ENCODE measurements at regions of chr5 and their contacts with region 1.

Region 1: DNA sequence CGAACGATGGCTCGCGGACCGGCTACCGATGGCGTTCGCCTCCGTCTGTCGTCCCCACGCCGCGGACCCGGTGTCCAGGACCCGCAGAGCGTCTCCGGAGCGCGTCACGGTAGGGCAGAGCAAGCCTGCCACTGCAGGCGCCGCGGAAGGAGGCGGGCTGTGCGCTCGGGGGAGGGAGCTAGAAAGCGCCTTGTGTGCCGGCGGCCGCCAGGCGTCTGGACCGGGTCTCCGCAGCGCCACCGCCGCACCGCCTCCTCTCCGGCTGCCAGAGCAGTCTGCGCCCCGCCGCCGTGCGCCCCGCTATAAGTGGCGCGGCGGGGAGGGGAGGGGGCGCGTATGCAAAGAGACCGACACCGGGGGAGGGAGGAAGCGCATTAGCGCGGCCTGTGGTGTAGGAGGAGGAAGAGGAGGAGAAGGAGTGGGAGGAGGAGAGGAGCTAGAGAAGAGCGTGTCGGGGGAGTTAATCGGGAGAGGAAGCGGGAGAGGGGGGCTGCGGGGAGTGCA is at the start of gene ENC1:
- DNase-seq: peak; percentile 96
- ATAC-seq: peak; percentile 94
- total RNA-seq, gene ENC1: 3.7 TPM

Region 2: DNA sequence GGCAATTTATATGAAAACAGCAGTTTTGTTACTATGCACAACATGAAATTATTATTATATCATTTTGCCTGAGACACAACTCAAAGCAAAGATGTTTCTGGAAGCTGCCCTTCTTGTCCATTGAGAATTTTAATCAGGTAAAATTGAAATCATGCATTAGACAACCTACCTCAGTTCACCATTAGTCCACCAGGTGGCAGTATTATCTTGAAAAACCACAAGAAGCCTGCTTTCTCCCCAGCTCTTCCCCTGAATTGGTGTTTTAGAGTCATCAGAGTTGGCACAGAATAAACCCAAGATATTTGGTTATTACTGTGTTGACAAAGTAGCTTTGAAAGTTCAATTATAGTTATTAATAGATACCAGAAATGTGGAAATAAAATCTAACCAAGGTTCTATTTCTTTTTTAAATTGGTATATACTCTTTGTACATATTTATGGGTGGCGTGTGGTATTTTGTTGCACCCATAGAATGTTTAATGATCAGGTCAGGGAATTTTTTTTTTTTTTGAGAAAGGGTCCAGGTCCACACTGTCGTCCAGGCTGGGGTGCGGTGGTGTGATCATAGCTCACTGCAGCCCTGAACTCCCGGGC is 1049.3 kb before region 1 on chr5:
- intact Hi-C with region 1: loop called (anchors 10 kb)
- DNase-seq: no peak
- ATAC-seq: no peak

Region 3: GRCh38 chr5:74035521-74035981 is 605.0 kb before region 1 on chr5:
- intact Hi-C with region 1: loop called (anchors 5 kb)
- DNase-seq: no peak
- ATAC-seq: peak; percentile 72

Region 4: GRCh38 chr5:74288448-74289108 is 351.9 kb before region 1 on chr5:
- intact Hi-C with region 1: loop called (anchors 5 kb)
- DNase-seq: no peak
- ATAC-seq: peak; percentile 80

Region 5: GRCh38 chr5:74442466-74442865 is 198.0 kb before region 1 on chr5:
- intact Hi-C with region 1: loop called (anchors 5 kb)
- DNase-seq: no peak
- ATAC-seq: no peak

Region 6: GRCh38 chr5:74538206-74538661 is 102.3 kb before region 1 on chr5:
- intact Hi-C with region 1: loop called (anchors 5 kb)
- DNase-seq: peak; percentile 83
- ATAC-seq: peak; percentile 98

Measured in Right ventricle myocardium inferior (tissue), 1 donor.